ENCODE measurements at regions of chrX and their contacts with region 1.

Region 1: DNA sequence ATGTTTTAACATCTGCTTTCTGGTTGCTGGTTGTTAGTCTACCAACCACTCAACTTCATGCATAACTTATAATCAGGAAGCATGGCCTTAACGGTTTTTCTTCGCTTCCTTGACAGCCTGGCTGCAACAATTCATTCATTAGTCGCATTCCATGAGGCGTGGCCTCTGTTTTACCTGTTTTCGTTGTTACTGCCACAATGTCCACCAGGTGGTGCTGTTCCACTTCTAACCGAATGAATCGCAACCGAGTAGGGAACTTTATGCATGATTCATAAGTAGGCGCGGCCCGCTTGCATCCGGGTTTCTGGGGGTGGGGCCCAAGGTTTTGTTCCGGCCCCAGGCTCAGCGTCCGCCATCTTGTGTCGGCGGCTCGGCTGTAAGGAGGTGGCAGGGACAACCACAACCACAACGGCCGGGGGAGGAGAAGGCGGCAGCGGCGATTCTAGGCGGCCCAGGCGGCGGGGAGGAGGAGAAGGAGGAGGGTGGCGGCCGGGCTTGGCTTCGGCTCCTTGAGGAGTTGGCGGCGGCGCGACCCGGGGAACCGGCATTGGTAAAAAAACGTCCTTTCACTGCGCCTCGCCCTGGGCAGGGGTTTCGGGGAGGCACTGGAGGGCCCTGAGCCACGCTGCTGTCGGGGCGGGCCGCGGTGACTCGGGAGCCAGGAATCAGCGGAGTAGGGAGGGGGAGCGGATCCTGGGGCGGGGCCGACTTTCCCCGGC is at the start of gene UBA1:
- DNase-seq: peak; percentile 90 to 97 (median 92)
- H3K4me3 ChIP-seq: peak within 1 kb of the TSS; percentile 89 to 96 (median 92)
- H3K4me3 Mint-ChIP-seq: peak within 1 kb of the TSS; percentile 86 to 93
- H3K27ac ChIP-seq: peak within 1 kb of the TSS; percentile 82 to 98
- H3K27ac Mint-ChIP-seq: peak within 1 kb of the TSS; percentile 95 to 99 (median 98)
- H3K4me1 ChIP-seq: peaks cover 55 to 56% of the 10 kb centered on the region in 2 donors
- H3K4me1 Mint-ChIP-seq: peaks cover 55% of the 10 kb centered on the region
- H3K27me3 ChIP-seq: peaks cover 0 to 3% of the 10 kb centered on the region in 2 donors
- H3K27me3 Mint-ChIP-seq: peaks cover 0 to 31% (median 0%) of the 10 kb centered on the region in 3 donors
- CTCF ChIP-seq: peak; percentile 57
- polyA plus RNA-seq, gene UBA1: 125 to 157 (median 150) TPM

Region 2: GRCh38 chrX:47384502-47384901 is 190.9 kb after region 1 on chrX:
- intact Hi-C with region 1: loop called (anchors 5 to 10 kb)
- DNase-seq: peak; percentile 42 to 67 (median 58)
- H3K4me3 ChIP-seq: no peak overlapping the region
- H3K4me3 Mint-ChIP-seq: peak overlapping the region in 1 of 2 donors; percentile 26
- H3K27ac ChIP-seq: no peak overlapping the region
- H3K27ac Mint-ChIP-seq: no peak overlapping the region
- H3K4me1 ChIP-seq: no peaks in the 10 kb centered on the region
- H3K4me1 Mint-ChIP-seq: peaks cover 10% of the 10 kb centered on the region
- H3K27me3 ChIP-seq: no peaks in the 10 kb centered on the region
- H3K27me3 Mint-ChIP-seq: peaks cover 0 to 17% (median 3%) of the 10 kb centered on the region in 3 donors
- CTCF ChIP-seq: peak; percentile 75

Region 3: DNA sequence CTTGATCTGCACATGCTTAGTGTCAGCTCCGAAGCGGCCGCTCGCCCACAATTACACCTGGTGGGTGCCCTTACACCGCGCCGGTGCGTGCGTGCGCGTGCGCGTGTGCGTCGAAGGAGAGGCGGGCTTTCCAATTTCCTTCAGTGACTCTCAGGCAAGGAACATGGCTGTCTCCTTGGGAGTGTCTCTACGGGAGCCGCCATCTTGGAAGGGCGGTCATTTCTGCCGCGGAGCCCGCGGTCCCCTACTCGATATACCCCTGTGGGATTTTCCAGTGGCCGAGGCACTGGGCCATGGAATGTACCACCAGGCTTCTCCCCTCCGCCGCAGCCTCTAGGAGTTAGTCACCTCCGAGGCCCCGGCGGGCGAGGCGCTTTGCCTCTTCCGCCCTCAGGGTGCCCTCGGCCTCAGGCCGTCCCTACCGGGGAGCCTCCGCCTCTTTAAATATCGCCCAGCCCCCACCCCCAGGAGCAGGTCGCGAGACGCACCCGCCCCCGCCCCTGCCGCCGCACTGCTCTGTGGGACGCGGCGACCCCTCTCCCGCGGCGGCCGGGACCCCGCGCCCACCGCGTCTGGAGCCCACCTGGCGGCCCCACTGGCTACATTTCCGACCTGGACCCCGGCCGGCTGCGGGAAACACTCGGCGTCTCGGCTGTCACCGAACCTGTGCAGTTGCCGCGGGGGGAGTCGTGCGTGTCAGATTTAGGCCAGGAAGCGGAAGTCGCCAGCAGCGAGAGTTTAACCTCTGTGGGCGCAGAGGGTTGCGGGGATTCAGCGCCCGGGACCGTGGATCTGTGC is 289.1 kb after region 1 on chrX and contains the start of gene ZNF41:
- intact Hi-C with region 1: loop called in 1 of 2 experiments (anchors 5 kb)
- DNase-seq: peak; percentile 67 to 83 (median 70)
- H3K4me3 ChIP-seq: peak within 1 kb of the TSS; percentile 83 to 85 (median 83)
- H3K4me3 Mint-ChIP-seq: peak within 1 kb of the TSS; percentile 89 to 91
- H3K27ac ChIP-seq: peak within 1 kb of the TSS; percentile 86 to 91
- H3K27ac Mint-ChIP-seq: peak within 1 kb of the TSS; percentile 91 to 98 (median 96)
- H3K4me1 ChIP-seq: peaks cover 19 to 23% of the 10 kb centered on the region in 2 donors
- H3K4me1 Mint-ChIP-seq: peaks cover 29% of the 10 kb centered on the region
- H3K27me3 ChIP-seq: no peaks in the 10 kb centered on the region
- H3K27me3 Mint-ChIP-seq: peaks cover 0 to 11% (median 0%) of the 10 kb centered on the region in 3 donors
- CTCF ChIP-seq: no peak
- polyA plus RNA-seq, gene ZNF41: 1.8 to 4.3 (median 3.1) TPM

Region 4: GRCh38 chrX:47523297-47523696 is 329.7 kb after region 1 on chrX:
- intact Hi-C with region 1: loop called (anchors 2 to 5 kb)
- DNase-seq: peak; percentile 77 to 81 (median 79)
- H3K4me3 ChIP-seq: peak overlapping the region; percentile 4 to 74 (median 48)
- H3K4me3 Mint-ChIP-seq: peak overlapping the region; percentile 66 to 70
- H3K27ac ChIP-seq: no peak overlapping the region
- H3K27ac Mint-ChIP-seq: peak overlapping the region in 2 of 7 donors; percentile 43 to 50
- H3K4me1 ChIP-seq: peaks cover 6 to 11% of the 10 kb centered on the region in 2 donors
- H3K4me1 Mint-ChIP-seq: peaks cover 5% of the 10 kb centered on the region
- H3K27me3 ChIP-seq: peaks cover 0 to 5% of the 10 kb centered on the region in 2 donors
- H3K27me3 Mint-ChIP-seq: peaks cover 2 to 17% (median 8%) of the 10 kb centered on the region in 3 donors
- CTCF ChIP-seq: peak; percentile 68

Region 5: GRCh38 chrX:47644557-47645091 is 451.0 kb after region 1 on chrX:
- intact Hi-C with region 1: loop called in 1 of 2 experiments (anchors 10 kb)
- DNase-seq: peak in 2 of 3 donors; percentile 10 to 32
- H3K4me3 ChIP-seq: no peak overlapping the region
- H3K4me3 Mint-ChIP-seq: peak overlapping the region in 1 of 2 donors; percentile 37
- H3K27ac ChIP-seq: no peak overlapping the region
- H3K27ac Mint-ChIP-seq: peak overlapping the region in 4 of 7 donors; percentile 1 to 57 (median 42)
- H3K4me1 ChIP-seq: peaks cover 20 to 23% of the 10 kb centered on the region in 2 donors
- H3K4me1 Mint-ChIP-seq: peaks cover 30% of the 10 kb centered on the region
- H3K27me3 ChIP-seq: no peaks in the 10 kb centered on the region
- H3K27me3 Mint-ChIP-seq: peaks cover 0 to 1% (median 0%) of the 10 kb centered on the region in 3 donors
- CTCF ChIP-seq: no peak

Region 6: DNA sequence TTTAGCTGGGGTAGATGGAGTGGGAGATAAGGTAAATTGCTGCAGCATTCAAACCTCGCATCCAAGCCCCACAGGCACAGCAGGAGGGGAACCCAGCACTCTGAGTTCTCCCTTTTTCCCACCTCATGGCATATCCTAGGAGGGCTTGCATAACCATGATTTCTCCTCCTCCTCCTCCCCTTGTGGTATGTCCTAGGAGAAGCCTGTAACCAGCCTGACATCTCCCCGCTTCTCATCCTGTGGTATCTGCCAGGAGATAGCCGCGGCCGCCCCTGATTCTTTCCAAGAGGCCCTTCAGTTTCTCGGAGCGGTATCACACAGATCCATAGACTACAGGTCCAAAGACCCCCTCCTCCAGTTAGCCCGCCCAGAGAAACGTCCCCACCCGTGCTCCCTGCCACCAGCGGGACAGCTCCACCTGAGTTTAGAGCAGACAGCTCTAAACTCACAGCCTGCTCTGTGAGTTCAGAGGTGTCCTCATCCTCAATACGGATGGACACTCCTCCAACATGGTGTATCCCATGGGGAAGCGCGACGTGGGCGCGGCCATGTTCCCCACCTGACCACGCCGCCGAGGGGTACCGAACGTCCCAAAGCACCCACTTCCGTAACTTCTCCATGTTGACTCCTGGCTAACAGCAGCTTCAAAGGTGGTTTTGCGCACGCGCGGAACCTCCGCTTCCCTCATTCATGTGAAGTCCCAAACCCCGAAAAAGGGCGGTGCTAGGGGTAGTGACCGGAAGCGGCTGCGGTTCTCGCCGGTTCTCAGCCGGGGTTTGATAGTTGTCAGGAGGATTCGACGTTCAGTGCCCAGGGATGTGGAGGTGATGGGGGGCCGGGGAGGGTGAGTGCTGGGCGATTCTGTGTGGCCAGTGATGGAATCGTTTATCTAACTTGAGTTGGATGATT is 642.8 kb after region 1 on chrX and contains the start of gene ZNF81:
- intact Hi-C with region 1: loop called in 1 of 2 experiments (anchors 10 kb)
- DNase-seq: peak; percentile 94 to 95 (median 95)
- H3K4me3 ChIP-seq: peak within 1 kb of the TSS; percentile 71 to 79 (median 71)
- H3K4me3 Mint-ChIP-seq: peak within 1 kb of the TSS; percentile 98 to 99
- H3K27ac ChIP-seq: peak within 1 kb of the TSS; percentile 57 to 83
- H3K27ac Mint-ChIP-seq: peak within 1 kb of the TSS; percentile 88 to 95 (median 93)
- H3K4me1 ChIP-seq: peaks cover 7 to 20% of the 10 kb centered on the region in 2 donors
- H3K4me1 Mint-ChIP-seq: peaks cover 19% of the 10 kb centered on the region
- H3K27me3 ChIP-seq: no peaks in the 10 kb centered on the region
- H3K27me3 Mint-ChIP-seq: peaks cover 0 to 9% (median 0%) of the 10 kb centered on the region in 3 donors
- CTCF ChIP-seq: no peak
- polyA plus RNA-seq, gene ZNF81: 1.7 to 3.4 (median 2.4) TPM

Measured in CD14-positive monocyte (primary cell).